B cell (primary cell): ENCODE measurements at regions of chr11 and their contacts with region 1.

Region 1: DNA sequence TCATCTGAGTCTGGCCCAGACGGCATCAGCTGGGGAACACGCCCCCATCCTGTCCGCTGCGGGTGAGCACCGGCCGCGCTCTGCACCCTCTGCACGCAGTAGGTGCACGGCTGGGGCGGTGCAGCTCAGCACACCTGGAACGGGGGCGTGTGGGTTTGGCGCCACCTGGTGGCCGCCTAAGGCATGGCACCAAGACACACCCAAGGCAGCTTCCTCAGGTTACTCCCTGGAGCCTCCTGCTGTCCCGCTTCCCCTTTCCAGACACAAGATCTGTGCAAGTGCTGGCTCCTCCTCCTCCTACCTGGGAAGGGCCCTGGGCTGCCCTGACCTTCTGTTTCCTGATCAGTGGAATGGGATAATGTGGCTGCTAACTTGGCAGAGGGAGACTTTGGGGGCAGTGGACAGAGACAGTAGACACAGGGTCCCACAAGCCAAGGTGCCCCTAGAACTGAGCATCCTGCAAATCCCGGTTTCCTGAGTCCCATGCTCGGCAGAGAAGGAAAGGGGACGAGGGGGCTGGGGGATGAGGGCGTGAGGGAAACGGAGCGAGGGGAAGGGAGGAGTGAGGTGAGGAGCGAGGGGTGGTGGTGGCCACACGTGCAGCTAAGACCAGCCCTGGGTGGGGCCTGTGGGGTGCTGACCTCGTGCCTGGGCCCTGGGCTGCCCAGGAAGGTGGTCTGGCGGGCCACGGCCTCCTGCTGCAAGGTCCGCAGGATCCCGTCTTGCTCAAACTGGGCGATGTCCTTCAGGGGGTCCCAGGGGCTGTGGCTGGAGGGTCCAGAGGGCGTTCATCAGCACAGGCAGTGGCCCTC is 34.8 kb upstream of the CARS1 start:
- DNase-seq: peak; percentile 83
- ATAC-seq: peak; percentile 92
- H3K4me3 ChIP-seq: no peak overlapping the region
- H3K4me3 Mint-ChIP-seq: no peak overlapping the region
- H3K27ac ChIP-seq: no peak overlapping the region
- H3K27ac Mint-ChIP-seq: no peak overlapping the region
- H3K4me1 ChIP-seq: peaks cover 0 to 6% of the 10 kb centered on the region in 2 donors
- H3K4me1 Mint-ChIP-seq: no peaks in the 10 kb centered on the region
- H3K27me3 ChIP-seq: peaks cover 0 to 7% (median 0%) of the 10 kb centered on the region in 4 experiments
- H3K27me3 Mint-ChIP-seq: peaks cover 18% of the 10 kb centered on the region
- CTCF ChIP-seq: peak; percentile 98

Region 2: DNA sequence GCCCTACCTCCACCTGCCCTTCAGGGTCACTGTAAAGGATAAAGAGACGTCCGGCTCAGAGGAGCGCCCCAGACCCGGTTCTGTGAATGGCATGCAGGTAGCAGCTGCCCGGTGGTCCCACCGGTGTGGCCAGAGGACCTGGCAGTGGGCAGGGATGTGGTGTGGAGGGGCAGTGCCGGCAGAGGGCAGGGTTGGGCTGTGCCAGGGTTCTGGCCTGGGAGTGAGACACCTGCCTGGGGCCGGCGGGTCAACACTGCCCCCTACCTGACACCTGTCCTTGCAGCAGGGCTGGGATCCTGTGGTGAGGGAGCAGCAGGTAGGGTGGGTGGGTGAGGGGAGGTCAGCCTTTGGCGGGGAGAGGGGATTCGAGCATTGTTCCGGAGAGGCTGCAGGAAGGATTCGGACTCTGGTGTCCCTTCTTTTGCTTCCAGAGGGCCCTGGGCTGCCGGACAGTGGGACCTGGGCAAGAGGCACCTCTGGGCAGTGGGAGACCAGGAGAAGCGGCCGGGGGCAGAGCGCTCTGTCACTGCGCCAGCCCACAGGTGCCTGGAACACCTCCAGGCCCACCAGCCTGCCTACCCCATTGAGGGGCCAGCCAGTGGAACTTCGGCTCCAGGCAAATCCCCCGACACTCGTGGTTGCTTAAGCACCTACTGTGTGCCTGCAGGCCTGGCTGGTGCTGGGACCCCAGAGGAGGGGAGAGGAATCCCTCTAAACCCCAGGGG is 161.1 kb before region 1 on chr11:
- CTCF ChIA-PET with region 1: interaction called, 12 read pairs
- POLR2A ChIA-PET with region 1: no interaction called
- intact Hi-C with region 1: loop called (anchors 2 kb)
- DNase-seq: peak; percentile 58
- ATAC-seq: peak; percentile 53
- H3K4me3 ChIP-seq: peak overlapping the region in 4 of 5 experiments; percentile 35 to 65 (median 52)
- H3K4me3 Mint-ChIP-seq: peak overlapping the region; percentile 88
- H3K27ac ChIP-seq: no peak overlapping the region
- H3K27ac Mint-ChIP-seq: no peak overlapping the region
- H3K4me1 ChIP-seq: peaks cover 28% of the 10 kb centered on the region in 2 donors
- H3K4me1 Mint-ChIP-seq: peaks cover 16% of the 10 kb centered on the region
- H3K27me3 ChIP-seq: peaks cover 0 to 61% (median 17%) of the 10 kb centered on the region in 4 experiments
- H3K27me3 Mint-ChIP-seq: peaks cover 28% of the 10 kb centered on the region
- CTCF ChIP-seq: peak; percentile 41

Region 3: DNA sequence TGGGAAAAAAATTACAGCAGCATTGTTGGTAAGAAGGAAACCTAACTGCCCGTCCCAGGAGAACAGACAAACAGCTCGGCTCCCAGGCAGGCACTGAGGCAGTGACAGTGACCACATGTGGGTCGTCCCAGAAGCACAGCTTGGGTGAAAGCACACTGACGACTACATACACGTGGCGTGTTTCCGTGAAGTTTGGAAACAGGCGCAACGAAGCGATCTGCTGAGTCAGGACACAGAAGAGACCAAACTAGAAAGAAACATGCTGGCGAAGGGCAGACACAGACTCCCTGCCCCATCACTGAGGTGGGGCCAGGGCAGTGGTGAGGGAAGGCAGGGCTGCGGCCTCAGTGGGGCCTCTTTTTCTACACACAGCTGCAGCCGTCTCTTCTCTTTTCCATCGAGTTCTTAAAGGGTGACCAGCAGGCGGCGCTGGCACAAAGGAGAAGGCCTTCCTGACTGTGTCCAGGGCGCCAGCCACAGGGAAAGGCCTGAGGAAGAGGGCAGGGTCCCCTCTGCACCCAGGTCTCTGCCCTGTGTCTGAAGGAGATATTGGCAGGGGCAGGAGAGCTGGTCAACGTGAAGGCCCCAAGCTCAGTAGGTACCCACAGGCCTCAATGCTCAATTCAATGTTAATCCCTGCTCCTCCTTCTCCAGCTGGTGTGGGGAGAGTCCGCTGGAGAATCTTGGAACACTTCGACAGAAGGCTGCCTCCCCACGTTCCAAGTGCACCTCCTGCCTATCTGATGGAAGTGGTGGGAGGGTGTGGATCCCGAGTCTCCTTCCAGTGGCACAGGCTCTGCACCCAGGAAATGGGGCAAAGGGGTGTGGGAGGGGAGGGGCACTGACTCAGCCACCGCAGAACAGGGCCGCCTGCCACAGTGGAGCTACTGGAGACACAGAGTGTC is 54.7 kb before region 1 on chr11:
- CTCF ChIA-PET with region 1: interaction called, 112 read pairs
- POLR2A ChIA-PET with region 1: interaction called, 3 read pairs
- intact Hi-C with region 1: loop called (anchors 1 kb)
- DNase-seq: peak; percentile 51
- ATAC-seq: peak; percentile 34
- H3K4me3 ChIP-seq: no peak overlapping the region
- H3K4me3 Mint-ChIP-seq: peak overlapping the region; percentile 9
- H3K27ac ChIP-seq: peak overlapping the region in 1 of 2 donors; percentile 42
- H3K27ac Mint-ChIP-seq: peak overlapping the region; percentile 39
- H3K4me1 ChIP-seq: peaks cover 24 to 30% of the 10 kb centered on the region in 2 donors
- H3K4me1 Mint-ChIP-seq: peaks cover 26% of the 10 kb centered on the region
- H3K27me3 ChIP-seq: no peaks in the 10 kb centered on the region
- H3K27me3 Mint-ChIP-seq: no peaks in the 10 kb centered on the region
- CTCF ChIP-seq: peak; percentile 50

Region 4: GRCh38 chr11:3057069-3057963 is 34.7 kb before region 1 on chr11 and contains the start of gene CARS1:
- CTCF ChIA-PET with region 1: interaction called, 106 read pairs
- POLR2A ChIA-PET with region 1: no interaction called
- intact Hi-C with region 1: no loop called
- DNase-seq: peak; percentile 94
- ATAC-seq: peak; percentile 96
- H3K4me3 ChIP-seq: peak within 1 kb of the TSS; percentile 22 to 97 (median 87)
- H3K4me3 Mint-ChIP-seq: peak within 1 kb of the TSS; percentile 93
- H3K27ac ChIP-seq: peak within 1 kb of the TSS; percentile 43 to 94
- H3K27ac Mint-ChIP-seq: peak within 1 kb of the TSS; percentile 83
- H3K4me1 ChIP-seq: peaks cover 15 to 20% of the 10 kb centered on the region in 2 donors
- H3K4me1 Mint-ChIP-seq: peaks cover 35% of the 10 kb centered on the region
- H3K27me3 ChIP-seq: no peaks in the 10 kb centered on the region
- H3K27me3 Mint-ChIP-seq: no peaks in the 10 kb centered on the region
- CTCF ChIP-seq: no peak
- total RNA-seq, gene CARS1: 49.5 and 56.7 TPM in 2 replicates

Region 5: GRCh38 chr11:3378426-3379423 is 286.7 kb after region 1 on chr11 and contains the start of gene ZNF195:
- CTCF ChIA-PET with region 1: no interaction called
- POLR2A ChIA-PET with region 1: no interaction called
- intact Hi-C with region 1: no loop called
- DNase-seq: peak; percentile 95
- ATAC-seq: peak; percentile 100
- H3K4me3 ChIP-seq: peak within 1 kb of the TSS; percentile 67 to 97 (median 87)
- H3K4me3 Mint-ChIP-seq: peak within 1 kb of the TSS; percentile 97
- H3K27ac ChIP-seq: peak within 1 kb of the TSS; percentile 63 to 92
- H3K27ac Mint-ChIP-seq: peak within 1 kb of the TSS; percentile 95
- H3K4me1 ChIP-seq: peaks cover 16 to 24% of the 10 kb centered on the region in 2 donors
- H3K4me1 Mint-ChIP-seq: peaks cover 39% of the 10 kb centered on the region
- H3K27me3 ChIP-seq: no peaks in the 10 kb centered on the region
- H3K27me3 Mint-ChIP-seq: no peaks in the 10 kb centered on the region
- CTCF ChIP-seq: no peak
- total RNA-seq, gene ZNF195: 46.0 and 47.3 TPM in 2 replicates